Ascending aorta (tissue), 2 donors: ENCODE measurements at regions of chrX and their contacts with region 1.

Region 1: DNA sequence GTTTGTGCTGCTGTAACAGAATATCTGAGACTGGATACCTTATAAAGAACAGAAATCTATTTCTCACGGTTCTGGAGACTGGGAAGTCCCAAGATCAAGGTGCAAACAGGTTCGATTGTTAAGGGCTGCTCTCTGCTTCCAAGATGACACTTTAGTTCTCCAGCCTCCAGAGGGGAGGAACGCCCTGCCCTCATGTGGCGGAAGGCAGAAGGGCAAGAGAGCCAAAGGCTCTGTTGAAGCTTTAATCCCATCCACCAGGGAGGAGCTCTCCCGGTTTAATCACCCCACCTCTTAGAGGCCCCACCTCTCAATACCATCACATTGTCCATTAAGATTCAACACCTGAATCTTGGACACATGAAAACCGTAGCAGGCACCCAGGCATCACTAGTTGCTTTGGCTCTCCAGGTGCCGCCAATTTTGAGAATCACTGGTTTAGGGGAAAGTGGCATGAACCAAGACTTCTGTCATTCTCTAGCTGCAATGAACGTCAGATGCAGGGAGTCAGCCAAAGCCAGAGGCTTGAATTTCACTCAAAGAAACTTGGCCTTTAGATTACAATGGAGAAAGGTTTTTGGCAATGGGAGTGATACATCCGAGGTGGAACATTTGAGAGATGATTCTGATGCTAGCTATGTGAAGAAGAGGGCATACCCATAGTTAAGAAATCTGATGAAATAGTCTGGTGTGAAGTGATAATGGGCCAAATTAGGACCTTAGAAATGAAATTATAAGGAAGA is 15.7 kb downstream of the FHL1 start:
- DNase-seq: peak in 1 of 2 donors; percentile 78
- H3K4me3 ChIP-seq: peak overlapping the region in 1 of 2 donors; percentile 30
- H3K27ac ChIP-seq: peak overlapping the region; percentile 61 to 80
- H3K4me1 ChIP-seq: peaks cover 3 to 13% of the 10 kb centered on the region in 2 donors
- H3K27me3 ChIP-seq: no peaks in the 10 kb centered on the region
- CTCF ChIP-seq: peak; percentile 65 to 72 (median 68)

Region 2: DNA sequence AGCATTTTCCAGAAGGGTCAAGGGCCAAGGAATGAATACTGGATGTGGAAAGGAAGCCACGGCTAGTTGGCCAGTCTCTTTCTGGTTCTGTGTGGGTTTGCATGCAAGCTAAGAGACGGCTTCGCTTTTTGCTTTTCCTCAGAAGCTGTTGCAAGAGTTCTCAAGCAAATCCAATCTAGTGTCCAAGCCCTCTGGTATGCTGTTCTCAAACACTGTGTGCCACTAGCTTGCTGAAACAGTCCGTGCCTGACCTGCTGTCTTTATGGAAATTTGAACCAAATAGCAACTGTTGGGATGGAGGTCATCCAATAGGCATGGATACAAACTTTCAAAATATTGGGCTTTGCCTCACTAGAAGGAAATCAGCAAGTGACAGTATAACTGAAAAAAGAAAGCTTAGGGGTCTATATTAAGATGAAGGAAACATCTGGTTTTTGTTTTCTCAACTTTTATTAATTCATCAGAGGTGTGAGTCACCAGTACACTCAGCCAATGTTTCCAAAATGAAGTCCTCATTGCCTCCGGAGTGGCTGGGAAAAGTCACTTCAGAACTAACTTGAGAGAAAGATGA is 107.3 kb before region 1 on chrX:
- intact Hi-C with region 1: loop called (anchors 5 kb)
- DNase-seq: peak; percentile 13 to 88
- H3K4me3 ChIP-seq: peak overlapping the region; percentile 25
- H3K27ac ChIP-seq: peak overlapping the region; percentile 91 to 94
- H3K4me1 ChIP-seq: peaks cover 0 to 39% of the 10 kb centered on the region in 2 donors
- H3K27me3 ChIP-seq: no peaks in the 10 kb centered on the region
- CTCF ChIP-seq: no peak

Region 3: DNA sequence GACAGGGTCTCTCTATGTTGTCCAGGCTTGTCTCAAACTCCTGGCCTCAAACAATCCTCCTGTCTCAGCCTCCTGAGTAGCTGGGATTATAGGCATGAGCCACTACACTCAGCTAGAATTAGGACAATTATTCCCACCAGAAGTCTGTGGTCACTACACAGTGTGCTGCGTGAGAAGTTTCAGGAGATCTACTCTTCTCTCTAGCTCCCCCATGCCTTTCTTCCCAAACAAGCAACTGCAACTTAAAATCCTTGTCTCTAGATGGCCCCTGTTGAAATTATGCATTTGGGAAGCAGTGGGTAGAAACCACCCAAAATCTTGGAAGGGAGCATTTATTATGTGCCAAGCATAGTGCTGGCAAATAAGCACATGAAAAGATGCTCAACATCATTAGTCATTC is 109.3 kb after region 1 on chrX:
- intact Hi-C with region 1: no loop called
- DNase-seq: no peak
- H3K4me3 ChIP-seq: no peak overlapping the region
- H3K27ac ChIP-seq: no peak overlapping the region
- H3K4me1 ChIP-seq: no peaks in the 10 kb centered on the region
- H3K27me3 ChIP-seq: no peaks in the 10 kb centered on the region
- CTCF ChIP-seq: peak in 1 of 3 experiments; percentile 11